HCT116 (cell line): ENCODE measurements at regions of chr2 and their contacts with region 1.

Region 1: GRCh38 chr2:231674587-231675338 is 33.6 kb upstream of the PTMA start:
- DNase-seq: no peak
- ATAC-seq: peak; percentile 33
- H3K4me3 ChIP-seq: peak overlapping the region; percentile 48 to 63
- H3K27ac ChIP-seq: peak overlapping the region; percentile 93
- H3K4me1 ChIP-seq: peaks cover 52 to 85% of the 10 kb centered on the region in 2 experiments
- H3K27me3 ChIP-seq: no peaks in the 10 kb centered on the region
- CTCF ChIP-seq: peak in 2 of 3 experiments; percentile 91 to 92; a peak in 4 of 6 replicates
- POLR2A ChIP-seq: no peak
- RAD21 ChIP-seq: no peak

Region 2: DNA sequence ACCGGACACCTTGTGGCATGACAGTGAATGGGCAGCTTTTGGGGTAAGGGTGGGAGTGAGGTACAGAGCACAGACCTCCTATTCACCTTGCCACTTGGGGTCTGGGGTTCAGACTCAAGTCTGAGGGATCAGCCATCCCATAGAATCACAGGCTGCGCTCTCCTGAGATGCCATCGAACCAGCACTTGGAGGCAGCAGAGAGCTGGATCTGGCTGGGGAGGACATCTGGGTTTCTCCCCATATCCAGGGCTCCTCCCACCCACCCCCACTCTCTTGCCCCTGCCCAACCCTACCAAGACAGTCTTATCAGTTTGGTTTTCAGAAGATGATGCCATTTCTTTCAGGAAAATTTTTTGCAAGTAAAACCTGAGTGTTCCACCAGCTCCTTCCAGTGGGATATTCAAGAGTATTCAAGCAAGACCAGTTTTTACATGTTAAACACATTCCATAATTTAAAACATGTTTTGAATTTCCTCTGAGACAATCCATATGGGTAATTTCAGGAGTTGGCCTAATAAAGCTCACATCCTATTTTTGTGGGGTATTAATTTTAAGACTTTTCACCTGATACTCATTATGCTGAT is 111.3 kb before region 1 on chr2:
- CTCF ChIA-PET with region 1: interaction called, 5 read pairs
- POLR2A ChIA-PET with region 1: no interaction called
- RAD21 ChIA-PET with region 1: interaction called, 3 to 4 read pairs
- intact Hi-C with region 1: loop called (anchors 2 kb)
- DNase-seq: peak; percentile 65
- ATAC-seq: peak; percentile 99
- H3K4me3 ChIP-seq: no peak overlapping the region
- H3K27ac ChIP-seq: no peak overlapping the region
- H3K4me1 ChIP-seq: no peaks in the 10 kb centered on the region
- H3K27me3 ChIP-seq: no peaks in the 10 kb centered on the region
- CTCF ChIP-seq: peak; percentile 65 to 77 (median 67)
- POLR2A ChIP-seq: no peak
- RAD21 ChIP-seq: peak; percentile 83

Region 3: DNA sequence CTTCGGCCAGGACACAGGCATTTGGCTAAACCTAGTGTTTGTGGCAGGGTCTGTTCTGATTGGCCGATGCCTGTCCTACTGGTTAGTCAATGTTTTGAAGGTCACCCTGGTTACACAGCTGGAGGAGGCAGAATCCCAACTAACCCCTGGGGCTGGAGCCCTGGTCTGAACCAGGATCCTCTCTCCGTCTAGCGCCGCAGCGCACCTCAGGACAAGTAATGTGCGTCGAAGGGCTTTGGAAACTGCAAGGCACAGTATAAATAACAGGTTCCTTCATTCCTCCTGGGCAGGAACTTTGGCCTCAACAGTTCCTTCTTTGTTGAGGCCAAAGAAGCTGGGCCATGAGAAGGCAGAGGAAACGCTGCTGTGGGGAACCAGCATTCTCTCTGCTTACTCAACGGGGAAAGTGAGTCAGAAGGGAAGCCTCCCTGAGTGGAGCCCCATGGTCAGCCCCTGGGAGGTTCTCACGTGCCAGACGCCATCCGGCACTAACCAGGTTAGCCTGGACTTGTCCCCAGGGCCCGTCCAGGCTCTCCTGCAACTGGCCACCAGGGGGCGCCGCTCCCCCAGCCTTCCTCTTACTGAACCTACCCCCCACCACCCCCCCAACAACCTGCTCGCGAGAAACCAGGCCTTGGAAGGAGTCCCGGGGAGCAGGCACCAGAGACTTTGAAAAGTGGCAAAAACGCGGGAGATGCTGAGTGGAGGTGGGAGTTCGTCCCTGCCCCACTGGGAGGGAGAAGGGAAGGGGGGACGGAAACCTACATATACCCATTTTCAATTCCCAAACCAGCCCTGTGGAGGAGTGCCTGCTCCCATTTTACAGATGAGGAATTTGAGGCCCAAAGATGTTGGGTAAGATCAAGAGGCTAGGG is 62.3 kb before region 1 on chr2:
- CTCF ChIA-PET with region 1: interaction called, 162 read pairs
- POLR2A ChIA-PET with region 1: interaction called, 97 read pairs
- RAD21 ChIA-PET with region 1: interaction called in 1 of 2 experiments, 11 read pairs
- intact Hi-C with region 1: loop called (anchors 1 kb)
- DNase-seq: peak; percentile 88
- ATAC-seq: peak; percentile 66
- H3K4me3 ChIP-seq: peak overlapping the region; percentile 18 to 34
- H3K27ac ChIP-seq: peak overlapping the region; percentile 99
- H3K4me1 ChIP-seq: peaks cover 54 to 68% of the 10 kb centered on the region in 2 experiments
- H3K27me3 ChIP-seq: no peaks in the 10 kb centered on the region
- CTCF ChIP-seq: peak in 2 of 3 experiments; percentile 90 to 96; a peak in 4 of 6 replicates
- POLR2A ChIP-seq: no peak
- RAD21 ChIP-seq: no peak

Region 4: DNA sequence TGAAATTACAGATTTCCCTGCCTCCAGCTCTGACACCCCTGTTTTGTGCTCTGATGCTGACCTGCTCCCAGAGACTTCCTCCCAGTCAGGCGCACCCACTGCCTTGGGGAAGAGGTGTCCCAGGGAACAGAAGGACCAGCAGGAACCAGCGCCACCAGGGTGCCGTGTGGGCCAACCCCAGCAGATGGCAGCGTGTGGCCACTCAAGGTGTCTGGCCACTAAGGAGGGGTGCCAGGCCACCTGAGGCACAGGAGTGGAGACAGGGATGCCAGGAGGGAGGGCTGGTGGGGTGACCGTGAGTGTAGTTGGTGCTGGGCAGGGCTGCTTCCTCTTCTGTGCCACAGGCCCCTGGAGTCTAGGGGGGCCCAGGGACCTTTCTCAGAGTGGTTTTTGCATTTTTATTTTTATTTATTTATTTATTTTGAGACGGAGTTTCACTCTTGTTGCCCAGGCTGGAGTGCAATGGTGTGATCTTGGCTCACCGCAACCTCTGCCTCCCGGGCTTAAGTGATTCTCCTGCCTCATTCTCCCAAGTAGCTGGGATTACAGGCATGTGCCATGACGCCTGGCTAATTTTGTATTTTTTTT is 26.1 kb before region 1 on chr2:
- CTCF ChIA-PET with region 1: interaction called, 9 read pairs
- POLR2A ChIA-PET with region 1: interaction called, 9 read pairs
- RAD21 ChIA-PET with region 1: interaction called, 3 to 4 read pairs
- intact Hi-C with region 1: loop called (anchors 1 kb)
- DNase-seq: peak; percentile 78
- ATAC-seq: peak; percentile 98
- H3K4me3 ChIP-seq: no peak overlapping the region
- H3K27ac ChIP-seq: no peak overlapping the region
- H3K4me1 ChIP-seq: peaks cover 26 to 54% of the 10 kb centered on the region in 2 experiments
- H3K27me3 ChIP-seq: no peaks in the 10 kb centered on the region
- CTCF ChIP-seq: peak in 2 of 3 experiments; percentile 89; a peak in 4 of 6 replicates
- POLR2A ChIP-seq: no peak
- RAD21 ChIP-seq: no peak

Region 5: DNA sequence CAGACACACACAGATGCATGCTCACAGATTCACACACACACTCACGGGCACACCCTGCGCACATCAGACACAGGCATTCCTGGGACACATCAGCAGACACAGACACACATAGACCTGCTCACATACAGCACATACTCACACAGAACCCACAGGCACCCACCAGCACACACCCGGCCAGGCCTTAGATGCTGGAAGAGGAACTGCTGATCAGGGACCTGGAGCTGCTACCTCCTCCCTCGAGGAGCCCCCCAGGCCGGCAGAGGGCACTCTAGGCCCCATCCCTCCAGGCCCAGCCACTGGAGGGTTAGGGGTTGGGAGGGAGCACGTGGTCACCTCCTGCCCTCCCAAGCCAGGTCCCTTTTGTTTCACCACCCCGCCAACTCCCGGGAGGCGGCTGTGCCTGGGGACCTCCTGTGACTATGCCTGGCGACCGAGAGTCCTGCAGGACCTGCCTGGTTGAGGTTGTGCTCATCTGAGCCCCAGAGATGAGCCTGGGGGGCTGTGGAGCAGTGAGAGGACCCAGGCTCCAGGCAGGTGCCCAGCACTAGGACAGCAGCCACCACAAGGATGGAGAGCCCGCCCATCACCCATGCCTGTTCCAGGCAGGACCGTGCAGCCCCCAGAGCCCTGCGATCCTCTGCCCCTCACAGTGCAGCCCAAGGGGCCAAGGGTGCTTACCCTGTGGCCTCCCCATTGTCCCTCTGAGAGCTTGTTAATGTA is 12.5 kb after region 1 on chr2:
- CTCF ChIA-PET with region 1: interaction called, 20 read pairs
- POLR2A ChIA-PET with region 1: interaction called, 10 read pairs
- RAD21 ChIA-PET with region 1: no interaction called
- intact Hi-C with region 1: no loop called
- DNase-seq: no peak
- ATAC-seq: peak; percentile 89
- H3K4me3 ChIP-seq: peak overlapping the region; percentile 10 to 26; a peak in 2 of 4 replicates
- H3K27ac ChIP-seq: peak overlapping the region; percentile 73
- H3K4me1 ChIP-seq: peaks cover 22 to 33% of the 10 kb centered on the region in 2 experiments
- H3K27me3 ChIP-seq: no peaks in the 10 kb centered on the region
- CTCF ChIP-seq: peak in 2 of 3 experiments; percentile 73 to 88; a peak in 4 of 6 replicates
- POLR2A ChIP-seq: peak; percentile 39
- RAD21 ChIP-seq: no peak

Region 6: GRCh38 chr2:231706731-231707624 is 32.2 kb after region 1 on chr2:
- CTCF ChIA-PET with region 1: interaction called, 29 read pairs
- POLR2A ChIA-PET with region 1: interaction called, 50 read pairs
- RAD21 ChIA-PET with region 1: no interaction called
- intact Hi-C with region 1: no loop called
- DNase-seq: peak; percentile 98
- ATAC-seq: peak; percentile 57
- H3K4me3 ChIP-seq: peak overlapping the region; percentile 85 to 94
- H3K27ac ChIP-seq: peak overlapping the region; percentile 99
- H3K4me1 ChIP-seq: peaks cover 20 to 44% of the 10 kb centered on the region in 2 experiments
- H3K27me3 ChIP-seq: no peaks in the 10 kb centered on the region
- CTCF ChIP-seq: peak in 2 of 3 experiments; percentile 88 to 96; a peak in 4 of 6 replicates
- POLR2A ChIP-seq: no peak
- RAD21 ChIP-seq: no peak

Region 7: GRCh38 chr2:231786177-231786916 is 111.6 kb after region 1 on chr2 and contains the start of gene COPS7B:
- CTCF ChIA-PET with region 1: no interaction called
- POLR2A ChIA-PET with region 1: no interaction called
- RAD21 ChIA-PET with region 1: no interaction called
- intact Hi-C with region 1: loop called (anchors 5 kb)
- DNase-seq: peak; percentile 68
- ATAC-seq: peak; percentile 78
- H3K4me3 ChIP-seq: peak within 1 kb of the TSS; percentile 87 to 95
- H3K27ac ChIP-seq: peak within 1 kb of the TSS; percentile 83
- H3K4me1 ChIP-seq: peaks cover 11 to 23% of the 10 kb centered on the region in 2 experiments
- H3K27me3 ChIP-seq: no peaks in the 10 kb centered on the region
- CTCF ChIP-seq: peak; percentile 46 to 73 (median 55); a peak in 5 of 6 replicates
- POLR2A ChIP-seq: no peak
- RAD21 ChIP-seq: peak; percentile 42; the same call in 1 of the 2 replicates
- total RNA-seq, gene COPS7B: 52.9 TPM